PC-9 (cell line): ENCODE measurements at regions of chr2 and their contacts with region 1.

Region 1: DNA sequence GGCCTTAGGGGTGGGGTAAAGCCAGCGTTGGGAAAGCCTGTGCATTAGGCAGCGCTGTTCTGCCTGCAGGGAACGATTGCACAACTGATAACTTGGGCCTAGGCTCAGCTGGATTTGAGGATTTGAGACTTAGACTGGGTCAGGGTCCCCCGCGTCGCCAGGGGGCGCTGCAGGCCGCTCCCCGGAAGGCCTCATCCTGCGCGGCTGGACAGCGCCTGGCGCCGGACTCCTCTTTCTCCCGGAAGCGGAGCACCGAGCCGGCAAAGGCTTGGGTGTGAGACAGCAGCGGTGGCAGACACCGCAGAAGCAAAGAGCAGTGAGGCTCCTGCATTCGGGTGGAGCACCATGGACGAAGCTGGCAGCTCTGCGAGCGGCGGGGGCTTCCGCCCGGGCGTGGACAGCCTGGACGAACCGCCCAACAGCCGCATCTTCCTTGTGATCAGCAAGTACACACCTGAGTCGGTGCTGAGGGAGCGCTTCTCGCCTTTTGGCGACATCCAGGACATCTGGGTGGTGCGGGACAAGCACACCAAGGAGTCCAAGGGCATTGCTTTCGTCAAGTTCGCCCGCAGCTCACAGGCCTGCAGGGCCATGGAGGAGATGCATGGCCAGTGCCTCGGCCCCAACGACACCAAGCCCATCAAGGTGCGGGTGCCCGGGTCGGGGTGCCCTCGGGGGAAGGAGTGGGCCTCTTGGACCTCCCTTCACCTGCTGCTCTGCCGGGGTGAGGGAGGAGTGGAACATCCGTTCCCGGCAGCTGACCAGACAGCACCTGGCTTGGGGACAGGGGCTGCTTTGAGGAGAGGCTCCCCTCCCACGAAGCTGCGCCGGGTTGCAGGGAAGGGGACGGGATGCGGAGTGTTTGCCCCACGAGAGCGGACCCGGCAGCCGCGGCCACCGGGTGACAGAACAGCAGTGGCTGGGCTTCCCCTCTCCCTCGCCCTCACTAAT is at the start of gene RBM45:
- DNase-seq: peak; percentile 92 to 96
- H3K4me3 ChIP-seq: peak within 1 kb of the TSS; percentile 77
- H3K27ac ChIP-seq: no peak within 1 kb of the TSS; the same call in 1 of the 2 replicates
- H3K4me1 ChIP-seq: peaks cover 15% of the 10 kb centered on the region
- H3K27me3 ChIP-seq: no peaks in the 10 kb centered on the region
- CTCF ChIP-seq: peak; percentile 100
- total RNA-seq, gene RBM45: 8.7 and 12.6 TPM in 2 replicates

Region 2: GRCh38 chr2:177906041-177906718 is 206.3 kb before region 1 on chr2:
- CTCF ChIA-PET with region 1: no interaction called
- POLR2A ChIA-PET with region 1: no interaction called
- intact Hi-C with region 1: loop called (anchors 5 kb)
- DNase-seq: peak in 1 of 2 experiments; percentile 73
- H3K4me3 ChIP-seq: no peak overlapping the region
- H3K27ac ChIP-seq: no peak overlapping the region
- H3K4me1 ChIP-seq: no peaks in the 10 kb centered on the region; the same call in 1 of the 2 replicates
- H3K27me3 ChIP-seq: no peaks in the 10 kb centered on the region
- CTCF ChIP-seq: peak; percentile 95

Region 3: DNA sequence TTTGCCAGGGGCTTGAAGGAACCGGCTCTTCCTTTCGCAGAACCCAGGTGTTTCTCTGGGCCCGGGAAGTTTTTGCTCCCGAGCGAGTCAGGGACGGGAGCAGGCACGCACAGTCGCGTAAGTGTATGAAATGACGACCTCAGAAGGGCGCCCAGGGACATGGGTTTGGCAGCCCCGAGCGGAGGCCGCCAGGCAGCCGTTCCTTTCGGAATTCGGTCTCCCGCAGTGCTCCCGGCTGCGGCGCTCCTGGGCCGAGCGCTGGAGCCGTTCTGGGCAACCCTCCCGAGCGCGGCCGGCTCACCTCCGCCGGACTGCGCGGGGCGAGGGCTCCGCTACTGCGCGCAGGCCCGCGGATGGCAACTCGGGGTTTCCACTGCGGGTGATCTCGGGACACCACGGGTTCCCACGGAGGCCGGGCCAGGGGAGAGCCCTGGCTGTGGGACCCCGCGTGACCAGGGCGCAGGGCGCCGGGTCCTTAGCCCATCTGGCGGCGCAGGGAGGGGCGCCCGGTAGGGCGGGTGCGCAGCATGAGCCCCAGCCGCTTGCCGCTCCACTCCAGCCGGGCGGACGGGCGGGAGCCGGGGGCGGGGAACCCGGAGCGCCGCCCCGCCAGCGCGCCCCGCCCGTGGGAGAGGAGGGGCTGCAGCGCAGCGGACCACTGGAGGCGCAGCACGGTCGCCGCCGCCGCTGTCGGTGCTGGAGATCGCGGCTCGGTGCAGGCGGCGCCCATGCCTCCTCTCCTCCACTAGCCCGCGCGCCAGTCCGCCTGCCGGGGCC is 81.5 kb after region 1 on chr2 and contains the start of gene OSBPL6:
- CTCF ChIA-PET with region 1: no interaction called
- POLR2A ChIA-PET with region 1: no interaction called
- intact Hi-C with region 1: loop called (anchors 1 kb)
- DNase-seq: peak; percentile 63 to 93
- H3K4me3 ChIP-seq: peak within 1 kb of the TSS; percentile 93
- H3K27ac ChIP-seq: no peak within 1 kb of the TSS
- H3K4me1 ChIP-seq: peaks cover 16% of the 10 kb centered on the region
- H3K27me3 ChIP-seq: peaks cover 24% of the 10 kb centered on the region; the same call in 1 of the 2 replicates
- CTCF ChIP-seq: no peak; the same call in 1 of the 2 replicates
- total RNA-seq, gene OSBPL6: 2.6 and 3.5 TPM in 2 replicates

Region 4: GRCh38 chr2:178414266-178415247 is 302.1 kb after region 1 on chr2:
- CTCF ChIA-PET with region 1: interaction called, 19 read pairs
- POLR2A ChIA-PET with region 1: interaction called, 4 read pairs
- intact Hi-C with region 1: loop called (anchors 1 kb)
- DNase-seq: peak; percentile 91 to 93
- H3K4me3 ChIP-seq: peak overlapping the region; percentile 72
- H3K27ac ChIP-seq: peak overlapping the region; percentile 55; the same call in 1 of the 2 replicates
- H3K4me1 ChIP-seq: peaks cover 18% of the 10 kb centered on the region
- H3K27me3 ChIP-seq: no peaks in the 10 kb centered on the region
- CTCF ChIP-seq: peak; percentile 99

Region 5: GRCh38 chr2:178542569-178542968 is 430.1 kb after region 1 on chr2:
- CTCF ChIA-PET with region 1: no interaction called
- POLR2A ChIA-PET with region 1: no interaction called
- intact Hi-C with region 1: no loop called
- DNase-seq: no peak
- H3K4me3 ChIP-seq: no peak overlapping the region
- H3K27ac ChIP-seq: no peak overlapping the region
- H3K4me1 ChIP-seq: no peaks in the 10 kb centered on the region
- H3K27me3 ChIP-seq: no peaks in the 10 kb centered on the region
- CTCF ChIP-seq: no peak

Region 6: GRCh38 chr2:178700922-178701342 is 588.5 kb after region 1 on chr2:
- CTCF ChIA-PET with region 1: no interaction called
- POLR2A ChIA-PET with region 1: interaction called, 5 read pairs
- intact Hi-C with region 1: loop called (anchors 1 kb)
- DNase-seq: no peak
- H3K4me3 ChIP-seq: no peak overlapping the region
- H3K27ac ChIP-seq: no peak overlapping the region
- H3K4me1 ChIP-seq: no peaks in the 10 kb centered on the region
- H3K27me3 ChIP-seq: no peaks in the 10 kb centered on the region
- CTCF ChIP-seq: peak; percentile 100